Activated CD4-positive, alpha-beta T cell treated with anti-CD3 and anti-CD28 coated beads for 36 hours (primary cell): ENCODE measurements at regions of chr14 and their contacts with region 1.

Region 1: DNA sequence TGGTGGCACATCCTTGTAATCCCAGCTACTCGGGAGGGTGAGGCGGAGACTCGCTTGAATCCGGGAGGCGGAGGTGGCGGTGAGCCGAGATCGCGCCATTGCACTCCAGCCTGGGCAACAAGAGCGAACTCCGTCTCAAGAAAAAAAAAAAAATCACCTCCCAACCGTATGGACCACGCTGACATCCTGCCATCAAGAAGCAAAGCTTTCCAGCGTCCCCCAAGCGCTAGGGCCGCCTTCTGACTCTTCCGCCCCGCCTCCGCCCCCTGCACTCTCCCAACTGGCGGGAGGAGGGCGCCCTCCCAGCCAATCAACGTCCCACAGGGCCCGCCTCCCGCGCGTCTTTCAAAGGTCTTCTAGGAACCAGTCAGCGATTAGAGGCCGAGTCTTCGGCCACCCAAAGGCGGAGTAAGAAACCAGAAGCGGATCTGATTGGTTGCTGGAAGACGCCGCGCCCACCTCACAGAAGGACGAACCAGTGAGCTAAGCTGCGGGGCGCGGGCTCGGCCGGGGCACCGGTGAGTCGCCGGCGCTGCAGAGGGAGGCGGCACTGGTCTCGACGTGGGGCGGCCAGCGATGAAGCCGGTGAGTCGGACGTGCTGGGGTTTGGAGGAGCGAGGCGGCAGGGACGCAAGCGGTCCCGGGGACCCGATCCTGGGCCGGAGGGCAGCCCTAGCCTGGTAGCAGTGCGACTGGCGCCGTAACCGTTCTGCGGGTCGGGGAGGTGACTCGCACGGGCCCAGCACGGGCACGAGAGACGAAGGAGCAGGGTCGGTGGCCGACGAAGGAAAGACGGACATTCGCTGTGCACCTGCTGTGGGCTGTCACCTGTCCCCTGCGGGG is at the start of gene CDKN3:
- DNase-seq: peak; percentile 98
- ATAC-seq: peak; percentile 97
- H3K4me3 Mint-ChIP-seq: peak within 1 kb of the TSS; percentile 82
- H3K27ac Mint-ChIP-seq: peak within 1 kb of the TSS; percentile 76
- H3K4me1 Mint-ChIP-seq: peaks cover 24% of the 10 kb centered on the region
- H3K27me3 Mint-ChIP-seq: no peaks in the 10 kb centered on the region
- total RNA-seq, gene CDKN3: 86.7 to 133 TPM

Region 2: GRCh38 chr14:53180268-53181221 is 1216.2 kb before region 1 on chr14:
- CTCF ChIA-PET with region 1: no interaction called
- POLR2A ChIA-PET with region 1: no interaction called
- intact Hi-C with region 1: no loop called
- DNase-seq: peak; percentile 61
- ATAC-seq: peak; percentile 73
- H3K4me3 Mint-ChIP-seq: no peak overlapping the region
- H3K27ac Mint-ChIP-seq: peak overlapping the region; percentile 71
- H3K4me1 Mint-ChIP-seq: peaks cover 39% of the 10 kb centered on the region
- H3K27me3 Mint-ChIP-seq: peaks cover 2% of the 10 kb centered on the region

Region 3: DNA sequence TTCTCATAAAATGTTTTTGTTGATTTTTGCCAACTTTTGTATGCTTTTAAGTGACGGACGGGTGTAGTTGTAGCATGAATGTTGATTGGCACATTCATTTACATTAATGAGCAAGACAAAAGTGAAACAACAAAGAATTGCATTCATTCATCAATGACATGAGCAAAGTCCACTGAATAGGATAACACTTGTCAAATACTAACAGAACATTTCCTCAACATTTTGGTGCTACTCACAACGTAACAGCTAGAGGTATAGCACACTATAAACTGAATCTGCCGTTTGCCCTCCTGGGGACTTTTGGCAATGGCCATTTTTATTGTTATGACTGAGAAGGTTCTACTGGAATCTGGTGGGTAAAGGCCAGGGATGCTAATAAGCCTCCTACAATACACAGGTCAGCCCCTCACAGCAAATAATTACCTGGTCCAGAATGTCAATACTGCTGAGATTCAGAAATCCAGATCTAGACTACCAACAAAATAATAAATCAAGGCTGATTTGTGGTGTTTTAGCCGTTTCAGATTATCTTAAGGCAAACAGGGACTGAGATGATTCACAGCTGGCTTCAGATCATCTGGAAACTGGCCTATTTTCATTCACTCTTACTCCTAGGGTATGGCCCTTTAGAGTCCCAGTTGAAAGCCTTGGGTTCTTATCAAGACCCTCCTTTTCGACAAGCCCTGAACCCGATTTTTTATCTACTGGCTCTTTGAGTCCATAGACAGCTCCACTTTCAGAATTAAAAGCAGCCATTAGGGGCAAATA is 22.4 kb before region 1 on chr14:
- CTCF ChIA-PET with region 1: no interaction called
- POLR2A ChIA-PET with region 1: no interaction called
- intact Hi-C with region 1: no loop called
- DNase-seq: no peak
- ATAC-seq: no peak
- H3K4me3 Mint-ChIP-seq: no peak overlapping the region
- H3K27ac Mint-ChIP-seq: no peak overlapping the region
- H3K4me1 Mint-ChIP-seq: no peaks in the 10 kb centered on the region
- H3K27me3 Mint-ChIP-seq: peaks cover 5% of the 10 kb centered on the region

Region 4: GRCh38 chr14:54435500-54435981 is 38.8 kb after region 1 on chr14:
- CTCF ChIA-PET with region 1: interaction called, 8 read pairs
- POLR2A ChIA-PET with region 1: interaction called, 5 read pairs
- intact Hi-C with region 1: loop called in 1 of 2 experiments (anchors 1 kb)
- DNase-seq: peak; percentile 32
- ATAC-seq: peak; percentile 96
- H3K4me3 Mint-ChIP-seq: peak overlapping the region; percentile 47
- H3K27ac Mint-ChIP-seq: peak overlapping the region; percentile 87
- H3K4me1 Mint-ChIP-seq: peaks cover 80% of the 10 kb centered on the region
- H3K27me3 Mint-ChIP-seq: no peaks in the 10 kb centered on the region

Region 5: DNA sequence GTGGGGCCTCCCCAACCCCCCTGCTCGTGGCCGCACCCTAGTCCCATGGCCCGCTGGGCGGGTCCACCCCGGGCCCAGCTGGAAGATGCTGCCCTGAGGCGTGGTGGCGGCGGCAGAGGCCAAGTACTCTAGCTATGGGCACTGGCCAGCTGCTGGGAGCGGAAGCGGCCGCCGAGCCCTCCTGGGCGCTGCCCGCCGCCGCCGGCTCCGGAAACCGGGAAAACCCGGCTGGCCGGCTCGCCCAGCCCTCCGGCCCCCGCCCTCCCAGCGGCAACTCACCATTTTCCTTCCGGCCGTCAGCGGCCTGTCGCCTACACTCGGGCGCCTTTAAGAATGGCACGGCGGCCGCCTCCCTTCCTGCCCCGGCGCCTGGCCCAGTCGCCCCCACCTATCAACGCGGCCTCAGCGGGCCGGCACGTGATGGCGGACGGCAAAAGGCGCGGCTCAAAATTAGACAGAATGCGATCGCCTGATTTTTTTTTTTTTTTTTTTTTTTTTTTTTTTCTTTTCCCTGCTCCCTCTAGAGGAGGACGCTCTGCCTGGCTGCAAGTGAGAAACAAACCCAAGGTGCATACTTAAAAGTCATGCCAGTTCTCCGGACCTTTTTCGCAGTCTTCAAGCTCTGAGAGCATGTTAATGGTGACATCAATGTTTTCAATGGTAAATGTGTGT is 92.1 kb after region 1 on chr14 and contains the start of gene GMFB:
- CTCF ChIA-PET with region 1: interaction called, 3 read pairs
- POLR2A ChIA-PET with region 1: no interaction called
- intact Hi-C with region 1: loop called (anchors 1 to 2 kb)
- DNase-seq: peak; percentile 94
- ATAC-seq: peak; percentile 96
- H3K4me3 Mint-ChIP-seq: peak within 1 kb of the TSS; percentile 91
- H3K27ac Mint-ChIP-seq: peak within 1 kb of the TSS; percentile 96
- H3K4me1 Mint-ChIP-seq: peaks cover 56% of the 10 kb centered on the region
- H3K27me3 Mint-ChIP-seq: no peaks in the 10 kb centered on the region
- total RNA-seq, gene GMFB: 28.9 to 37.3 TPM